ENCODE measurements at regions of chr2 and their contacts with region 1.

Region 1: DNA sequence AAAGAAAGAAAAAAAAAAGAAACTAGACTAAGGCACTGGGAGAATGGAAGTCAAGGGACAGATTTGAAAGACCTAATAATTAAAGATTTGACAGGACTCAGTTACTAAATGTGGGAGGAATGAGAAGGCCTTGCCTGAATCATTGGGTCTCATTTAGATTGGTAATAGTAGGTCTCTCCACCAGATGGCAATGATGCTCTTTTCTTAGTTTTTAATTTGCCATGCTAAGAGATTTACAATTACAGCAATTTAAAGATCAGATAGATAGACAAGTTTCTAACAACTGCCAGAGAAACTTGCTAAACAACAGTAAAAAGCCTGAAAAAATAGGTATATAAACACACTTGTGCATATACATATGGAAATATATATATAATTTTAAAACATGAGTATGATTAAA is 153.0 kb downstream of the TMEM247 start:
- DNase-seq: no peak
- ATAC-seq: peak; percentile 38 to 64

Region 2: GRCh38 chr2:46887028-46887885 is 254.9 kb after region 1 on chr2:
- intact Hi-C with region 1: loop called (anchors 1 to 2 kb)
- DNase-seq: no peak
- ATAC-seq: no peak

Region 3: GRCh38 chr2:47323009-47323821 is 690.9 kb after region 1 on chr2:
- intact Hi-C with region 1: loop called in 1 of 2 experiments (anchors 5 kb)
- DNase-seq: peak; percentile 69
- ATAC-seq: peak; percentile 95 to 96

Measured in left cardiac atrium (tissue), 4 donors.